BJ (cell line): ENCODE measurements at regions of chr10 and their contacts with region 1.

Region 1: GRCh38 chr10:102524746-102525145 is 21.0 kb downstream of the SUFU start:
- DNase-seq: no peak
- H3K4me3 ChIP-seq: no peak overlapping the region
- H3K27me3 ChIP-seq: no peaks in the 10 kb centered on the region
- CTCF ChIP-seq: no peak

Region 2: DNA sequence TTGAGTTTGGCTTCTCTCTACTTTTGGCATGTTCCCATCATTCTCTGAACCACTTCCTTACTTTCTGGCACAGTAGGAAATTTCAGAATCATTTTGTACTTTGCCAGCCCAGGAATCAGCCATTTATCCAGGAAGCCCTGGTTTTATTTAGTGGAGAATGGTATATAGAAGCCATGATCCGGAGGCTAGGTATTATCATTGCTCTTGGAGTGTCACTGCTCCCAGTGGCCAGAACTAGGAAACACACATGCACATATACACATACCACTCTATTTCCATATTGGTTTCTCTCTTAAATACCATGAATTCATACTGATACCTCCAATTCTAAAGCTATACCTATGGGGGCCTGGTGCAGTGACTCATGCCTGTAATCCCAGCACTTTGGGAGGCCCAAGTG is 15.3 kb after region 1 on chr10:
- CTCF ChIA-PET with region 1: interaction called, 4 read pairs
- POLR2A ChIA-PET with region 1: interaction called, 25 read pairs
- DNase-seq: no peak
- H3K4me3 ChIP-seq: no peak overlapping the region
- H3K27me3 ChIP-seq: no peaks in the 10 kb centered on the region
- CTCF ChIP-seq: peak; percentile 41

Region 3: GRCh38 chr10:103102195-103102594 is 577.4 kb after region 1 on chr10:
- CTCF ChIA-PET with region 1: no interaction called
- POLR2A ChIA-PET with region 1: no interaction called
- DNase-seq: no peak
- H3K4me3 ChIP-seq: no peak overlapping the region
- H3K27me3 ChIP-seq: no peaks in the 10 kb centered on the region
- CTCF ChIP-seq: no peak